PC-9 (cell line): ENCODE measurements at regions of chr20 and their contacts with region 1.

Region 1: GRCh38 chr20:25486377-25486776 is 78.9 kb downstream of the GINS1 start:
- DNase-seq: no peak
- H3K4me3 ChIP-seq: no peak overlapping the region
- H3K27ac ChIP-seq: no peak overlapping the region
- H3K4me1 ChIP-seq: peaks cover 16% of the 10 kb centered on the region
- H3K27me3 ChIP-seq: no peaks in the 10 kb centered on the region
- CTCF ChIP-seq: no peak

Region 2: GRCh38 chr20:25273541-25274358 is 212.6 kb before region 1 on chr20:
- CTCF ChIA-PET with region 1: no interaction called
- POLR2A ChIA-PET with region 1: no interaction called
- intact Hi-C with region 1: no loop called
- DNase-seq: no peak
- H3K4me3 ChIP-seq: no peak overlapping the region
- H3K27ac ChIP-seq: no peak overlapping the region
- H3K4me1 ChIP-seq: no peaks in the 10 kb centered on the region
- H3K27me3 ChIP-seq: no peaks in the 10 kb centered on the region
- CTCF ChIP-seq: no peak

Region 3: GRCh38 chr20:25496968-25497640 is 10.7 kb after region 1 on chr20:
- CTCF ChIA-PET with region 1: no interaction called
- POLR2A ChIA-PET with region 1: no interaction called
- intact Hi-C with region 1: loop called (anchors 1 kb)
- DNase-seq: peak; percentile 91 to 92
- H3K4me3 ChIP-seq: no peak overlapping the region
- H3K27ac ChIP-seq: no peak overlapping the region
- H3K4me1 ChIP-seq: peaks cover 13% of the 10 kb centered on the region
- H3K27me3 ChIP-seq: no peaks in the 10 kb centered on the region
- CTCF ChIP-seq: no peak

Region 4: DNA sequence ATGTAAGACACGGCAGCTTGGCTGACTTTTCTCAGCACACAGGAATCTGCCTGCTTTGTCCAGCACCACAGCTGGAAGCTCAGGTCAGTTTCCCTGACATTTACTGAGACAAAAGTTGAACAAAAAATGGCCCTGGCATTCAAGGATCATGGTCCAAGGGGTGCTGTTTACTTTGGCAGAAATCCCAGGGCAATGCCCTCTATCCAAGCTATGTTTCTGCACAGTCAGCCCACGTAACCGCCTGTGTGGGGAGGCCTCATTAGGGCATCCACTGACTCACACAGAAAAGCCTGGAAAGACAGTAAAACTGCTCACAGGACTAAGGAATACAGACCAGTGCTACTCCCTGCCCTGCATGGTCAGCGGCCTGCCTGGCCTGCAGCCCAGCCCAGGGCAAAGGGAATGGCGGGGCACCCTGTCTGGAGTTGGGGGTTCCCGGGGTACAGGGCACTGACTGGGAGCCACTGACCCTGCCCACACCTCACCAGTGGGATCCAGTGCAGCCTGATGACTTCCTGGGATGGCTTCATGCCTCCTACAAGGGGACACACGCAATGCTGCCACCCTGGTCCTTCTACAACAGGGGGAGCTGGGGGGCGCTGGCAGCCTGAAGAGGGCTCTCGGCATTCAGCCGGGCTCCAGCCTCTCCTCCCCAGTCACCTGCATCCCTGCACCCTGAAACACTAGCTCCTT is 21.8 kb after region 1 on chr20:
- CTCF ChIA-PET with region 1: no interaction called
- POLR2A ChIA-PET with region 1: no interaction called
- intact Hi-C with region 1: loop called (anchors 2 kb)
- DNase-seq: peak; percentile 66 to 73
- H3K4me3 ChIP-seq: no peak overlapping the region
- H3K27ac ChIP-seq: no peak overlapping the region
- H3K4me1 ChIP-seq: peaks cover 9% of the 10 kb centered on the region; the same call in 1 of the 2 replicates
- H3K27me3 ChIP-seq: no peaks in the 10 kb centered on the region
- CTCF ChIP-seq: no peak

Region 5: GRCh38 chr20:25539742-25540672 is 53.6 kb after region 1 on chr20:
- CTCF ChIA-PET with region 1: no interaction called
- POLR2A ChIA-PET with region 1: no interaction called
- intact Hi-C with region 1: loop called (anchors 10 kb)
- DNase-seq: no peak
- H3K4me3 ChIP-seq: no peak overlapping the region
- H3K27ac ChIP-seq: no peak overlapping the region
- H3K4me1 ChIP-seq: peaks cover 3% of the 10 kb centered on the region; the same call in 1 of the 2 replicates
- H3K27me3 ChIP-seq: no peaks in the 10 kb centered on the region
- CTCF ChIP-seq: peak; percentile 37; the same call in 1 of the 2 replicates